Naive thymus-derived CD4-positive, alpha-beta T cell (primary cell): ENCODE measurements at regions of chr10 and their contacts with region 1.

Region 1: GRCh38 chr10:61903221-61903927 is 1.9 kb downstream of the ARID5B start:
- DNase-seq: peak; percentile 56 to 78 (median 69)
- ATAC-seq: peak; percentile 58
- H3K4me3 ChIP-seq: peak overlapping the region; percentile 96
- H3K4me3 Mint-ChIP-seq: peak overlapping the region; percentile 81 to 100 (median 94)
- H3K27ac ChIP-seq: peak overlapping the region; percentile 92
- H3K27ac Mint-ChIP-seq: peak overlapping the region; percentile 93 to 100 (median 97)
- H3K4me1 ChIP-seq: peaks cover 18 to 25% of the 10 kb centered on the region in 2 donors
- H3K4me1 Mint-ChIP-seq: peaks cover 14 to 59% (median 49%) of the 10 kb centered on the region in 7 donors
- H3K27me3 ChIP-seq: no peaks in the 10 kb centered on the region
- H3K27me3 Mint-ChIP-seq: peaks cover 0 to 2% (median 0%) of the 10 kb centered on the region in 5 donors

Region 2: GRCh38 chr10:61284222-61284890 is 619.0 kb before region 1 on chr10:
- CTCF ChIA-PET with region 1: no interaction called
- POLR2A ChIA-PET with region 1: no interaction called
- intact Hi-C with region 1: no loop called
- DNase-seq: peak in 6 of 9 donors; percentile 7 to 43 (median 26)
- ATAC-seq: peak; percentile 45
- H3K4me3 ChIP-seq: no peak overlapping the region
- H3K4me3 Mint-ChIP-seq: peak overlapping the region in 9 of 10 donors; percentile 12 to 81 (median 66)
- H3K27ac ChIP-seq: no peak overlapping the region
- H3K27ac Mint-ChIP-seq: peak overlapping the region in 1 of 9 donors; percentile 7
- H3K4me1 ChIP-seq: peaks cover 9 to 12% of the 10 kb centered on the region in 2 donors
- H3K4me1 Mint-ChIP-seq: peaks cover 13 to 24% (median 20%) of the 10 kb centered on the region in 7 donors
- H3K27me3 ChIP-seq: no peaks in the 10 kb centered on the region
- H3K27me3 Mint-ChIP-seq: peaks cover 0 to 22% (median 0%) of the 10 kb centered on the region in 5 donors

Region 3: DNA sequence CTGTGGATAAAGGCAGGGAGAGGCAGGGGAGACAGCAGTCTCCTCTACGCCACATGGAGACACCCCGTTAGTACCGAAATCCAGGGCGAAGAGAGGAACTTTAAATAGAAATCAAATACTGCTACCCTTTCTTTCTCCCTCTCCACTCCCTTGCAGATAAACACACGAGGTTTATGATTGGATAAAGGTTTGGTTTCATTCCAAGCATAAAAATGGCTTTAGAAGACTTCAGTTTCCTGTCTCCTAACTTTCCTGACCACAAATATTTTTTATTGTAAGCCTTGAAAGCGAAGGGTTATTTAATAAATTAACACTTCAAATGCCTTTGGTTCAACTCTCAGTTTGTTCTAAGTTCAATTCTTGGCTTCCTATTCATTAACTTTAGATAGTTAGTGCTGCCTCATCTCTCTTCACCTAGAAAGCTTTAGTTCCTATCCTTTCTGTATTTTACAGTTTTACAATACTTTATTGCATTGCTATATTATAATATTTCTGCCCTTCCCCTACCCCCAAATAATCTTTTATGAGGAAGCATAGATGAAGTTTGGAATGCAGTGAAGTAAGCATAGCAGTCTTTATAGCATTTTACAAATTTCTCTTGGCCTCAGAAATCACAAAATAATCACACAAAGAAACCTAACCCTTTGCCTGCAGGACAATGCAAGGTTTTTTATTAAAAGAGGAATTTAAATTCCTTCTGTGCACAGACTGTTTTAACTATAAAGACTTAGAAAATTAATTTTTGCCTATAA is 33.4 kb before region 1 on chr10:
- CTCF ChIA-PET with region 1: interaction called, 5 read pairs
- POLR2A ChIA-PET with region 1: interaction called, 13 read pairs
- intact Hi-C with region 1: loop called in 1 of 2 experiments (anchors 1 kb)
- DNase-seq: no peak
- ATAC-seq: no peak
- H3K4me3 ChIP-seq: no peak overlapping the region
- H3K4me3 Mint-ChIP-seq: no peak overlapping the region
- H3K27ac ChIP-seq: no peak overlapping the region
- H3K27ac Mint-ChIP-seq: no peak overlapping the region
- H3K4me1 ChIP-seq: no peaks in the 10 kb centered on the region
- H3K4me1 Mint-ChIP-seq: peaks cover 0 to 10% (median 4%) of the 10 kb centered on the region in 7 donors
- H3K27me3 ChIP-seq: peaks cover 0 to 3% of the 10 kb centered on the region in 2 donors
- H3K27me3 Mint-ChIP-seq: peaks cover 0 to 15% (median 3%) of the 10 kb centered on the region in 5 donors

Region 4: GRCh38 chr10:61882621-61883373 is 20.6 kb before region 1 on chr10:
- CTCF ChIA-PET with region 1: no interaction called
- POLR2A ChIA-PET with region 1: no interaction called
- intact Hi-C with region 1: no loop called
- DNase-seq: peak in 1 of 9 donors; percentile 66
- ATAC-seq: no peak
- H3K4me3 ChIP-seq: no peak overlapping the region
- H3K4me3 Mint-ChIP-seq: no peak overlapping the region
- H3K27ac ChIP-seq: no peak overlapping the region
- H3K27ac Mint-ChIP-seq: no peak overlapping the region
- H3K4me1 ChIP-seq: no peaks in the 10 kb centered on the region
- H3K4me1 Mint-ChIP-seq: peaks cover 0 to 10% (median 0%) of the 10 kb centered on the region in 7 donors
- H3K27me3 ChIP-seq: no peaks in the 10 kb centered on the region
- H3K27me3 Mint-ChIP-seq: peaks cover 0 to 3% (median 0%) of the 10 kb centered on the region in 5 donors

Region 5: DNA sequence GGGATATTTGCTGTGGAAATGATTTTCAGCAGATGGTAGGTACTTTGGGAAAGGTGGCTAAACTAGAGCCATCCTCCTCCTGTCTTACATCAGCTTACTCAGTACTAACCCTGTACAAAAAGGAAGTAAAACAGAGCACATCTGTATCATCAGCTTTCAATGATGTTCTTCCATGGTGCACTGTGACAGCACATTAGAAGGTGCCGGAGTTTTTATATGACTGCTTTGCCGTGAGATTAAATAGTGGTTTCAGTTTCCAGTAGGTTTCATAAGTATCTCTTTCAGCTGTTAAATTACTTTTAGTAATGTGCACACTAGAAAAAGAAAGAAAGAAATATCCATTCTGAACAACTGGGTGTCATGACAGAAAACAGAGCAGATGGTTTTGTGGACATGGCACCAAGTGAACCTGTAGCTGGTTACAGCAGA is 84.6 kb after region 1 on chr10:
- CTCF ChIA-PET with region 1: interaction called, 3 read pairs
- POLR2A ChIA-PET with region 1: interaction called, 10 read pairs
- intact Hi-C with region 1: loop called (anchors 1 kb)
- DNase-seq: peak in 7 of 9 donors; percentile 3 to 49 (median 21)
- ATAC-seq: peak; percentile 78
- H3K4me3 ChIP-seq: no peak overlapping the region
- H3K4me3 Mint-ChIP-seq: peak overlapping the region; percentile 8 to 86 (median 62)
- H3K27ac ChIP-seq: peak overlapping the region; percentile 30
- H3K27ac Mint-ChIP-seq: peak overlapping the region; percentile 64 to 98 (median 80)
- H3K4me1 ChIP-seq: peaks cover 25 to 27% of the 10 kb centered on the region in 2 donors
- H3K4me1 Mint-ChIP-seq: peaks cover 43 to 79% (median 76%) of the 10 kb centered on the region in 7 donors
- H3K27me3 ChIP-seq: no peaks in the 10 kb centered on the region
- H3K27me3 Mint-ChIP-seq: no peaks in the 10 kb centered on the region

Region 6: DNA sequence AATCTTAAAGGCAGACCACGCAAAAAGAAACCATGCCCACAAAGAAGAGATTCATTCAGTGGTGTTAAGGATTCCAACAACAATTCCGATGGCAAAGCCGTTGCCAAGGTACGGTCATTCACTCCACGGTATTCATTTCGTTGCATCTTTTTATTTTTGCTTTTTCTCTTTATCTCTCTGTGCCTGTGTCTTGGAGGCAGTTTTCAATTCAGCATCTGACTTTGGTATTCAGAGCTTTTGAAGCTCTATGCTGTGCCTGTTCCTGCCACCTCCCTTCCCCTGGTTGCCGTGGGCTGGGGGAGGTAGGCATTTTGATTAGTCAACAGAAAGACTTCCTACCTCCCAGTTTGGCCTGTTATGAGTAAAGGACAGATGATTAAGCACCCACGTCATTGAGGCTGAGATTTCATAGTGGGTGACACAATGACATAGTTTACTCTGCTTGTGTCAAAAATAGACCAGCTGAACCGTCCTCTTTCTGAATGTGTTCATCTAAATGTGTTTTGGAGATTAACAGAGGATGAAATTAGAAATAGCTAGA is 147.6 kb after region 1 on chr10:
- CTCF ChIA-PET with region 1: interaction called, 17 read pairs
- POLR2A ChIA-PET with region 1: interaction called, 86 read pairs
- intact Hi-C with region 1: loop called (anchors 1 kb)
- DNase-seq: peak; percentile 25 to 88 (median 78)
- ATAC-seq: peak; percentile 86
- H3K4me3 ChIP-seq: peak overlapping the region; percentile 62
- H3K4me3 Mint-ChIP-seq: peak overlapping the region; percentile 81 to 94 (median 88)
- H3K27ac ChIP-seq: peak overlapping the region; percentile 77
- H3K27ac Mint-ChIP-seq: peak overlapping the region; percentile 91 to 100 (median 96)
- H3K4me1 ChIP-seq: peaks cover 59 to 63% of the 10 kb centered on the region in 2 donors
- H3K4me1 Mint-ChIP-seq: peaks cover 60 to 99% (median 96%) of the 10 kb centered on the region in 7 donors
- H3K27me3 ChIP-seq: no peaks in the 10 kb centered on the region
- H3K27me3 Mint-ChIP-seq: no peaks in the 10 kb centered on the region

Region 7: GRCh38 chr10:62244780-62245467 is 341.6 kb after region 1 on chr10:
- CTCF ChIA-PET with region 1: interaction called, 37 read pairs
- POLR2A ChIA-PET with region 1: interaction called, 7 read pairs
- intact Hi-C with region 1: loop called (anchors 1 kb)
- DNase-seq: peak in 8 of 9 donors; percentile 35 to 80 (median 68)
- ATAC-seq: peak; percentile 94
- H3K4me3 ChIP-seq: no peak overlapping the region
- H3K4me3 Mint-ChIP-seq: peak overlapping the region in 6 of 10 donors; percentile 16 to 64 (median 42)
- H3K27ac ChIP-seq: no peak overlapping the region
- H3K27ac Mint-ChIP-seq: peak overlapping the region in 8 of 9 donors; percentile 6 to 85 (median 53)
- H3K4me1 ChIP-seq: peaks cover 6 to 9% of the 10 kb centered on the region in 2 donors
- H3K4me1 Mint-ChIP-seq: peaks cover 9 to 37% (median 30%) of the 10 kb centered on the region in 7 donors
- H3K27me3 ChIP-seq: no peaks in the 10 kb centered on the region
- H3K27me3 Mint-ChIP-seq: no peaks in the 10 kb centered on the region

Region 8: DNA sequence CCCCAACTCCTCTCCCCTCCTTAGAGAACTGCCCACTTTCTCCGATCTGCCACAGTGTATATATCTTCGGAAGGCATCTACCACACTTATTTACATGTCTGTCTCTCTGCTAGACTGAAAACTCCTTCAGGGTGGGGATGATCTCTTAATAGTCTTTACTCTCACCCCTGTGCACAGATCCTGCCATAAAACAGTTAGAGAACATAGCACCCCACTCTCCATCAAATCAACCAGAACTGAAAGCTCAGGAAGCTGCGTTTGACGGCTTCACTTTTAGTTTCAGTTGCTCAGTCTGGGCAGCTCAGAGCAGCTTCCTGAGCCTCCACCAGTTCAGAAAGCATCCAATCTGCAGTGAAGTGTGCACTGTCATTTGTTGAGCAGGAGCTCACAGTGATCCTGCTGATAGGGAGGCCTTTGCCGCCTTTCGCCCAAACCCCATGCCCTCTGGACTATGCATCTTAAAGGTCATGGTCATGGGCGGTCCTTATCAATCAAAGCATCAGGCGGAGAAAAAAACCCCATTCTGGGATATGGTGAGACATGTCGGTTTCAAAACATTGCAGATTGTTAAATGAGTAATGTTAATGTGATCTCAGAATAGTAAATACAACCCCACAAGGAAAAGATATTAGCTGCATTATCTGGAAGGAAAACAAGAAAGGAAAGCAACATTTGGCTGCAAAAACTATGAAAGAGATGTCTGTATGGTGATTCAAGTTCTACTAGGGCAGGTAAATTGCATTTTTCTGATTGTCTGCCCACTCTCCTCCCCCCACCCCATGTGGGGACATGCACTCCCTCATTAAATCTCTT is 734.1 kb after region 1 on chr10:
- CTCF ChIA-PET with region 1: no interaction called
- POLR2A ChIA-PET with region 1: interaction called, 3 read pairs
- intact Hi-C with region 1: loop called (anchors 2 to 5 kb)
- DNase-seq: peak; percentile 32 to 82 (median 75)
- ATAC-seq: peak; percentile 86
- H3K4me3 ChIP-seq: peak overlapping the region; percentile 67
- H3K4me3 Mint-ChIP-seq: no peak overlapping the region
- H3K27ac ChIP-seq: peak overlapping the region; percentile 70
- H3K27ac Mint-ChIP-seq: no peak overlapping the region
- H3K4me1 ChIP-seq: peaks cover 18 to 41% of the 10 kb centered on the region in 2 donors
- H3K4me1 Mint-ChIP-seq: peaks cover 2 to 38% (median 6%) of the 10 kb centered on the region in 7 donors
- H3K27me3 ChIP-seq: no peaks in the 10 kb centered on the region
- H3K27me3 Mint-ChIP-seq: no peaks in the 10 kb centered on the region